HCT116 (cell line): ENCODE measurements at regions of chr2 and their contacts with region 1.

Region 1: GRCh38 chr2:130181325-130181879 is at the start of gene SMPD4:
- DNase-seq: peak; percentile 90
- ATAC-seq: peak; percentile 71
- H3K4me3 ChIP-seq: peak within 1 kb of the TSS; percentile 94 to 97
- H3K27ac ChIP-seq: peak within 1 kb of the TSS; percentile 71
- H3K4me1 ChIP-seq: peaks cover 0 to 13% of the 10 kb centered on the region in 2 experiments; a peak in 1 of 4 replicates
- H3K27me3 ChIP-seq: no peaks in the 10 kb centered on the region
- CTCF ChIP-seq: no peak
- POLR2A ChIP-seq: no peak
- RAD21 ChIP-seq: no peak
- total RNA-seq, gene SMPD4: 98.9 TPM

Region 2: DNA sequence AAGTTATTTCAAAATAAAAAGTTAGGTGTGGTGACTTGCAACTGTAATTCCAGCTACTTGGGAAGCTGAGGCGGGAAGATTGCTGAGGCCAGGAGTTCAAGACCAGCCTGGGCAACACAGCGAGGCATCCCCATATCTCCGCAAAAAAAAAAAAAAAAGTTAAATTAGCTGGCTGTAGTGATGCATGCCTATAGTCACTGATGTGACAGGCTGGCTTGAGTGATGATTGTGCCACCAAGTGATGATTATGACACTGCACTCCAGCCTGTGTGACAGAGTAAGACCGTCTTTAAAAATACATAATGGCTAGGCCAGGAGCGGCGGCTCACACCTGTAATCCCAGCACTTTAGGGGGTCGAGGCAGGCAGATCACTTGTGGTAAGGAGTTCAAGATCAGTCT is 11.5 kb before region 1 on chr2:
- CTCF ChIA-PET with region 1: no interaction called
- POLR2A ChIA-PET with region 1: no interaction called
- RAD21 ChIA-PET with region 1: no interaction called
- intact Hi-C with region 1: no loop called
- DNase-seq: no peak
- ATAC-seq: no peak
- H3K4me3 ChIP-seq: no peak overlapping the region
- H3K27ac ChIP-seq: no peak overlapping the region
- H3K4me1 ChIP-seq: no peaks in the 10 kb centered on the region
- H3K27me3 ChIP-seq: no peaks in the 10 kb centered on the region
- CTCF ChIP-seq: no peak
- POLR2A ChIP-seq: no peak
- RAD21 ChIP-seq: no peak

Region 3: DNA sequence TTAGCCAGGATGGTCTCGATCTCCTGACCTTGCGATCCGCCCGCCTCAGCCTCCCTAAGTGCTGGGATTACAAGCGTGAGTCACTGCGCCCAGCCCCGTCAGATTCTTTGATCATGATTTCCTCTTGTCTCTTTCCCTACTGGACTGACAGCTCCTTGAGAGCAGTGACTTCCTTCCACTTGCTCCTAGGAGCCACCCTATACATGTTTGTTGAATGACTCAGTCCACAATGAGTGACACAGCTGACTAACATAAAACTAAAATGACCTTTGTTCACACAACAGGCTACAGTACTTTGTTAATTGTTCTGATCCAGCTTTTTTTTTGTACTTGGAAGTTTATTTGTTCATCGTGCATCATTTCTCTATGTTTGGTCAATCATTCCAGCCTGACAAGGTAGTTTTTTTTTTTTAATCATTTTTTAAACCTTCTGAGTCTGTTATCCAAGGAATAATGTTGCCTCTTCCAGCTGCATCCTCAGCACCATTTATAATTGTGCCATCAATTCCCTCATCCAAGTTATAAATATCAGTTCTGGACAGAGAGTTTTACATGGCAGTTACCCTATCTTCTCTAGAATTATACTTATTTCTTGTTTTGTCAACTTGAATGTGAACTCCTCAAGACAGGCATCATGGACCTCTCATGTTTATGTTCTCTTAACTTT is 59.8 kb after region 1 on chr2:
- CTCF ChIA-PET with region 1: no interaction called
- POLR2A ChIA-PET with region 1: no interaction called
- RAD21 ChIA-PET with region 1: no interaction called
- intact Hi-C with region 1: loop called (anchors 5 kb)
- DNase-seq: peak; percentile 96
- ATAC-seq: peak; percentile 100
- H3K4me3 ChIP-seq: no peak overlapping the region
- H3K27ac ChIP-seq: peak overlapping the region; percentile 34; the same call in 1 of the 2 replicates
- H3K4me1 ChIP-seq: peaks cover 11 to 23% of the 10 kb centered on the region in 2 experiments
- H3K27me3 ChIP-seq: no peaks in the 10 kb centered on the region
- CTCF ChIP-seq: no peak
- POLR2A ChIP-seq: no peak
- RAD21 ChIP-seq: no peak

Region 4: GRCh38 chr2:131492418-131493198 is 1311.2 kb after region 1 on chr2:
- CTCF ChIA-PET with region 1: interaction called, 7 read pairs
- POLR2A ChIA-PET with region 1: interaction called, 13 read pairs
- RAD21 ChIA-PET with region 1: interaction called in 1 of 2 experiments, 5 read pairs
- intact Hi-C with region 1: no loop called
- DNase-seq: peak; percentile 95
- ATAC-seq: peak; percentile 83
- H3K4me3 ChIP-seq: peak overlapping the region; percentile 90 to 93
- H3K27ac ChIP-seq: peak overlapping the region; percentile 84
- H3K4me1 ChIP-seq: peaks cover 2 to 26% of the 10 kb centered on the region in 2 experiments; a peak in 2 of 4 replicates
- H3K27me3 ChIP-seq: no peaks in the 10 kb centered on the region
- CTCF ChIP-seq: peak; percentile 74 to 93 (median 89)
- POLR2A ChIP-seq: no peak
- RAD21 ChIP-seq: peak; percentile 7